ENCODE measurements at regions of chr11 and their contacts with region 1.

Region 1: DNA sequence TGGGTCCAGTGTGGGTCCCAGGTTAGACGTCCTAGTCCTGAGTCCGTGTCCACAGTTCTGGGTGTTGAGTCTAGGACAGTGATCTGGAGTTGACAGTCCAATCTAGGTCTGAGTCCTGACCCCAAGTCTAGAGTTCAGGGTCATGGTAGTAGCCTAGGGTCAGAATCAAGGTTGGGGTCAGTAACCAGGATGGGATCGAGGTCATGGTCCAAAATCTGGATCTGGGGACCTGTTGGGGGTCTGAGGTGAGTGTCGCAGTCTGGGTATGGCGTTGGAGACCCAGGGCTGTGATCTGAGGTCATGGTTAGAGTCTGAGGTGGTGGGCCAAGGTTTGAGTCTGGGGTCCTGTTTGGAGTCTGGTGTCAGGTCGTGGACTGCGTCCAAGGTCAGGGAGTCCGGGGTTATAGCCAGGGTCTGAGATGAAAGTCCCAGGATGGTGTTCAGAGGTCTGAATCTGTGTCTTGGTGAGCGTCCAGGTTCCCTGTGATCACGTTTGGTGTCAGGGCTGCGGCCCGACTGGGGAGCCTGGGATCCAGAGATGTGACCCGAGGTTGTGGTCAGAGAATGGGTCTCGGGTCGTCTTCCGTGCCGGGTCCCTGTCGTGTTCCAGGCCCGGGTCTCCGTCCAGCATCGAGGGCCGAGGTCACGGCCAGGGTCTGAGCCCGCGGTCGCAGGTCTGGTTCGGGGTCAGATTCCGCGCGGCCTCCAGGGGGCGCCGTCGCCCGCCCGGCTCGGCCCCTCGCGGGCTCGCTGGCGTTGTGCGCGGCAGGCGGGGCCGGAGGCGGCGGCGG is 445 bp upstream of the GRK2 start:
- DNase-seq: peak; percentile 70 to 89
- ATAC-seq: peak; percentile 51 to 76 (median 64)
- H3K4me3 ChIP-seq: peak overlapping the region in 6 of 10 donors; percentile 22 to 38 (median 36)
- H3K27ac ChIP-seq: peak overlapping the region in 9 of 10 donors; percentile 32 to 86 (median 76)
- H3K4me1 ChIP-seq: peaks cover 25 to 76% (median 66%) of the 10 kb centered on the region in 9 donors
- H3K27me3 ChIP-seq: no peaks in the 10 kb centered on the region
- CTCF ChIP-seq: peak; percentile 65 to 81 (median 77)

Region 2: GRCh38 chr11:67288452-67289225 is 22.8 kb after region 1 on chr11:
- intact Hi-C with region 1: loop called in 1 of 10 experiments (anchors 2 kb)
- DNase-seq: peak; percentile 88 to 90
- ATAC-seq: peak; percentile 82 to 90 (median 86)
- H3K4me3 ChIP-seq: peak overlapping the region; percentile 56 to 99 (median 78)
- H3K27ac ChIP-seq: peak overlapping the region; percentile 76 to 98 (median 96)
- H3K4me1 ChIP-seq: peaks cover 7 to 91% (median 40%) of the 10 kb centered on the region in 9 donors
- H3K27me3 ChIP-seq: no peaks in the 10 kb centered on the region
- CTCF ChIP-seq: peak; percentile 26 to 72 (median 53)

Region 3: DNA sequence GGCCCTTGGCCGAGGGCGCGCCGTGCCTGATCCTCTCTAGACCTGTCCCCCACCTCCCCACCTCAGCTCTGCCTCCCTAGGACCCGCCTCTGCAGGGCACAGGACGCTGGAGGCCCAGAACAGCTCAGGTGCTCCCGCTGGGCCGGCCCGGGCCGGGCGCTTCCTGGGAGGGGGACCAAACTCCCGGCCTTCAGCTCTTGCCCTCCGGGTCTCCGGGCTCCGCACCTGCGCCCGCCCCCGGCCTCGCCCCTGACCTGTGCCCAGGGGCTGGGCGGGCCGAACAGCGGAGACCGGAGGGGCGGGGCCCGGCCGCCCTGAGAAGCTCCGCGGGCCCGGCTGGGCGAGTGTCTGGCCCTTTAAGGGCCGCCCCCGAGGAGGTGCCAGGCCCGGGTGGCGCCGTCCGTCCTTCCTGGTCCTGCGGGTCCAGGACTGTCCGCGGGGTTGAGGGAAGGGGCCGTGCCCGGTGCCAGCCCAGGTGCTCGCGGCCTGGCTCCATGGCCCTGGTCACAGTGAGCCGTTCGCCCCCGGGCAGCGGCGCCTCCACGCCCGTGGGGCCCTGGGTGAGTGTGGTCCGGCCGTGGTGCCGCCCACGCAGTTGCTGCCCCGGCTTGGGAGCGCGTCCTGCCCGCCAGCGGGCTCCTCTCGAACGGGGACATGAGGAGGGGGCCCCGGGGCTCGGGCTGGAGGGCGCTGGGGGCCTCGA is 37.5 kb after region 1 on chr11 and contains the start of gene SSH3:
- intact Hi-C with region 1: loop called in 2 of 10 experiments (anchors 5 kb)
- DNase-seq: peak; percentile 67 to 83
- ATAC-seq: peak; percentile 85 to 90 (median 88)
- H3K4me3 ChIP-seq: peak within 1 kb of the TSS; percentile 82 to 97 (median 92)
- H3K27ac ChIP-seq: peak within 1 kb of the TSS; percentile 29 to 94 (median 83)
- H3K4me1 ChIP-seq: peaks cover 10 to 36% (median 29%) of the 10 kb centered on the region in 9 donors
- H3K27me3 ChIP-seq: no peaks in the 10 kb centered on the region
- CTCF ChIP-seq: no peak
- total RNA-seq, gene SSH3: 11.9 to 21.2 (median 15.6) TPM

Region 4: DNA sequence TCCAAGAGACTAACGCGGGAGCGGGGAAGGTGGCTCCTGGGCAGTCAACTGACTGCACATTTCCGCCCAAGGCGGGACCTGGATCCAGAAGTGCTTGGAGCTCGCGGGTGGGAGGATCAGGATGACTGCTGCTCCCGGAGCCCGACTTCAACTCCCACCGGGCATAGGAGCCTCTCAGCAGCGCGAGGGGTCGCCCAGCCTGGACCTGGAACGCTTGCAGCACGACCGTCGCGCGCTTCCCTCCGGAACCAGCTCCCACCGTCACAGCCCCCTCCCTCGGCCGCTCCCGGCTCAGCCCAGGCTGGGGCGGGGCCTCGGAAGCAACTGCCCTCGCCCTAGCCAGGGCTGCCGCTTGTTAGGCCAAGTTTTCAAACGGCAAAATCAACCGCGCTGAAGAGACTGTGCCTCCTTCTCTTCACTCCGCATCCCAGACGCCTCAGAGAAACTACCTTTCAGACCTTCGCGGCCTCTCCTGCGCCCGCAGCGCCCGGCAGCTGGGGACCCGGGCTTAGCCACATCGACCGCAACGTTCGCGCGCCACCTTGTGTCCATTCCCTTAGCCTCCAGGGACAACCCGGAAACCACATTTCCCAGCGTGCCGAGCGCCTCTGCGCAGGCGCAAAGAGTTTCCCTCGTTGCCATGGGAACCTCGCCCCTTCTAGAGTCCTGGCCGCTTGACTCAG is 51.5 kb after region 1 on chr11:
- intact Hi-C with region 1: loop called (anchors 1 to 5 kb)
- DNase-seq: peak; percentile 96 to 97
- ATAC-seq: peak; percentile 93 to 97 (median 96)
- H3K4me3 ChIP-seq: peak overlapping the region; percentile 68 to 94 (median 78)
- H3K27ac ChIP-seq: peak overlapping the region; percentile 84 to 97 (median 94)
- H3K4me1 ChIP-seq: peaks cover 4 to 30% (median 19%) of the 10 kb centered on the region in 9 donors
- H3K27me3 ChIP-seq: no peaks in the 10 kb centered on the region
- CTCF ChIP-seq: peak; percentile 92 to 99 (median 97)

Region 5: GRCh38 chr11:67382276-67383136 is 116.7 kb after region 1 on chr11:
- intact Hi-C with region 1: loop called in 4 of 10 experiments (anchors 1 to 10 kb)
- DNase-seq: peak; percentile 81
- ATAC-seq: peak; percentile 76 to 91 (median 88)
- H3K4me3 ChIP-seq: no peak overlapping the region
- H3K27ac ChIP-seq: no peak overlapping the region
- H3K4me1 ChIP-seq: peaks cover 0 to 44% (median 4%) of the 10 kb centered on the region in 9 donors
- H3K27me3 ChIP-seq: peaks cover 0 to 7% (median 0%) of the 10 kb centered on the region in 7 donors
- CTCF ChIP-seq: peak; percentile 92 to 99 (median 96)

Measured in heart right ventricle (tissue), 16 donors.